ENCODE measurements at regions of chr19 and their contacts with region 1.

Region 1: GRCh38 chr19:43765109-43765876 is 10.5 kb upstream of the SMG9 start:
- DNase-seq: no peak
- ATAC-seq: no peak
- H3K4me3 Mint-ChIP-seq: no peak overlapping the region
- H3K27ac Mint-ChIP-seq: no peak overlapping the region
- H3K4me1 Mint-ChIP-seq: peaks cover 9% of the 10 kb centered on the region
- H3K27me3 Mint-ChIP-seq: peaks cover 11% of the 10 kb centered on the region
- CTCF ChIP-seq: no peak

Region 2: DNA sequence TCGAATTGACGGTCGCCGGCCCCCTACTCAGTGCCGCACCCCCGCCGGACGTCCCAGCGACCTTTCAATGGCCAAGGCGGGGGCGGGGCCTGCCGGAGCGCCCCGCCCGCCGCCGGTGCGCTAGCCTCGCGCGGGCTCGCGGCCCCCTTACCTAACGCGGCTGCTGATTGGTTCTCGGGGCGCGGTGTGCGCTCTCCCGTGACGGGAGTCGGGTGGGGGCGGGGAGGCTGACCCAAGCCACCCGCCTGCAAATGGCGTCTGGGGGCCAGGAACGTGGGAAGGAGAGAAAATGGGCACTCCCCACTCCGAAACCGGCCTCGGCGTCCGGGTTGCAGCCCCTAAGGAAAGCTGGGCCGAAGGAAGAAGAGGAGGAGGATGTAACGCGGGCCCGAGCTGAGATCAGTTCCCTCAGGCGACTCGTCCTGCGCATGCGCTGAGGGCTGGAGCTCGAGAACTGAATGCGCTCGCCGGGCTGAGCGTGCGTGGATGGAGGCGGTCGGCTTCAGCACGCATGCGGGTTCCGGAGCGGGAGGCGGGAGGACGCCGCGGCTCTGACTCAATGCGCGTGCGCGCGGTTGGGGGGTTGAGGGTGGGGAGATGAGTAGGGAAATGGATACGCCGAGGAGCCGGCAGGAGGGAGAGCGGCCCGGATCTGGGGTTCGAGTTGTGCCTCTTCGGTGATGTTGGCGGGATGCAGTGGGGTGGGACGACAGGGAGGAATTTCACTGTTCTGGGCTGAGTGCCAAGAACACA is 10.6 kb before region 1 on chr19 and contains the start of gene SMG9:
- CTCF ChIA-PET with region 1: interaction called, 76 read pairs
- POLR2A ChIA-PET with region 1: interaction called, 4 read pairs
- DNase-seq: peak; percentile 97
- ATAC-seq: peak; percentile 87
- H3K4me3 Mint-ChIP-seq: peak within 1 kb of the TSS; percentile 96
- H3K27ac Mint-ChIP-seq: peak within 1 kb of the TSS; percentile 99
- H3K4me1 Mint-ChIP-seq: peaks cover 30% of the 10 kb centered on the region
- H3K27me3 Mint-ChIP-seq: no peaks in the 10 kb centered on the region
- CTCF ChIP-seq: no peak
- total RNA-seq, gene SMG9: 25.7 to 39.6 TPM (median 34.3 TPM) in 3 replicates

Region 3: GRCh38 chr19:43784981-43785808 is 19.9 kb after region 1 on chr19:
- CTCF ChIA-PET with region 1: interaction called, 101 read pairs
- POLR2A ChIA-PET with region 1: no interaction called
- DNase-seq: peak; percentile 63
- ATAC-seq: peak; percentile 91
- H3K4me3 Mint-ChIP-seq: no peak overlapping the region
- H3K27ac Mint-ChIP-seq: no peak overlapping the region
- H3K4me1 Mint-ChIP-seq: peaks cover 5% of the 10 kb centered on the region; the same call in 1 of the 2 replicates
- H3K27me3 Mint-ChIP-seq: no peaks in the 10 kb centered on the region
- CTCF ChIP-seq: peak; percentile 82

Region 4: GRCh38 chr19:43809762-43810696 is 44.7 kb after region 1 on chr19:
- CTCF ChIA-PET with region 1: interaction called, 36 read pairs
- POLR2A ChIA-PET with region 1: no interaction called
- DNase-seq: no peak
- ATAC-seq: peak; percentile 39; the same call in 1 of the 2 replicates
- H3K4me3 Mint-ChIP-seq: no peak overlapping the region
- H3K27ac Mint-ChIP-seq: no peak overlapping the region
- H3K4me1 Mint-ChIP-seq: no peaks in the 10 kb centered on the region
- H3K27me3 Mint-ChIP-seq: peaks cover 23% of the 10 kb centered on the region
- CTCF ChIP-seq: peak; percentile 33

Region 5: GRCh38 chr19:44113138-44113783 is 348.0 kb after region 1 on chr19 and contains the start of gene ZNF225:
- CTCF ChIA-PET with region 1: no interaction called
- POLR2A ChIA-PET with region 1: no interaction called
- DNase-seq: peak; percentile 95
- ATAC-seq: peak; percentile 94
- H3K4me3 Mint-ChIP-seq: peak within 1 kb of the TSS; percentile 98
- H3K27ac Mint-ChIP-seq: peak within 1 kb of the TSS; percentile 93
- H3K4me1 Mint-ChIP-seq: peaks cover 9% of the 10 kb centered on the region
- H3K27me3 Mint-ChIP-seq: no peaks in the 10 kb centered on the region
- CTCF ChIP-seq: no peak
- total RNA-seq, gene ZNF225: 3.9 to 5.1 TPM (median 4.4 TPM) in 3 replicates